ENCODE measurements at regions of chr21 and their contacts with region 1.

Region 1: GRCh38 chr21:34888569-34889319 is 160.4 kb downstream of the RUNX1 start:
- DNase-seq: peak; percentile 91
- H3K4me3 ChIP-seq: peak overlapping the region; percentile 59 to 89 (median 80)
- H3K27ac ChIP-seq: peak overlapping the region; percentile 88
- H3K4me1 ChIP-seq: peaks cover 36% of the 10 kb centered on the region
- H3K27me3 ChIP-seq: peaks cover 21 to 36% of the 10 kb centered on the region in 2 experiments
- CTCF ChIP-seq: no peak
- POLR2A ChIP-seq: peak; percentile 99

Region 2: GRCh38 chr21:34782506-34783365 is 106.0 kb before region 1 on chr21:
- CTCF ChIA-PET with region 1: no interaction called
- POLR2A ChIA-PET with region 1: no interaction called
- dilution Hi-C with region 1: no loop called
- intact Hi-C with region 1: no loop called
- DNase-seq: no peak
- H3K4me3 ChIP-seq: no peak overlapping the region
- H3K27ac ChIP-seq: no peak overlapping the region
- H3K4me1 ChIP-seq: no peaks in the 10 kb centered on the region
- H3K27me3 ChIP-seq: peaks cover 0 to 5% of the 10 kb centered on the region in 2 experiments
- CTCF ChIP-seq: no peak
- POLR2A ChIP-seq: no peak

Region 3: GRCh38 chr21:34836103-34836932 is 52.4 kb before region 1 on chr21:
- CTCF ChIA-PET with region 1: interaction called, 18 read pairs
- POLR2A ChIA-PET with region 1: interaction called, 13 read pairs
- dilution Hi-C with region 1: no loop called
- intact Hi-C with region 1: loop called (anchors 1 kb)
- DNase-seq: peak; percentile 98
- H3K4me3 ChIP-seq: peak overlapping the region in 1 of 3 experiments; percentile 3
- H3K27ac ChIP-seq: peak overlapping the region; percentile 78
- H3K4me1 ChIP-seq: peaks cover 30% of the 10 kb centered on the region
- H3K27me3 ChIP-seq: no peaks in the 10 kb centered on the region
- CTCF ChIP-seq: no peak
- POLR2A ChIP-seq: peak; percentile 26

Region 4: DNA sequence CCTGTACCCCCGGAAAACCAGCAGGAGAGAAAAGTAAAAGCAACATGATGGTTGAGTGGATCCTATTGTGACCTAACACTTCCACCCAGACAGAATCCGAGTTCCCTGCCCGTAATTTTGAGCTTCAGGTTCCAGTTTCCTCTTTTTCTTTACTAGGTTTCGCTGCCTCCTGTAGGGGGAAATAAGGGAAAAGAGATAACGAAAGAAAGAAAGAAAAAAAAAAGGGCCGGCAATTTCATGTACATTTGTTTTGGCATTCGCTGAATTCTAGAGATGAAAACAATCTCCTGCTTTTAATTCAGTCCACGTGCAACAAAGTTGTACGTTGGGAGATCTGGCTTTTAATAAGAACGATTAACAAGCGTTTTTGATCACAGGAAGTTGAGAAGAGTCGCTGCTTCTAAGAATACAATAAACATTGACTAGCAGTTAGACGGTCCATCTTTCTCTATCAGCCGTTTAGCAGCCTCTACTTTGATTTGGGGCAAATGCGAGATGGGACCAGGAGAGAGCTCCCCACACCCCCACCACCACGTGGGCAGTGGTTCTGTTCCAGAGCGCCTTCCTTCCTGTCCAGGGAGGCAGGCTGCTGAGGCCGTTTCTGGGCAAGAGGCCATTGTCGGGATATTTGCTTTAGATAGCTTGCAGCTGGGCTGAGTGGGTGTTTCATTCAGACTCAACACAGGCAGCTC is 316.3 kb after region 1 on chr21:
- CTCF ChIA-PET with region 1: interaction called, 7 read pairs
- POLR2A ChIA-PET with region 1: interaction called, 5 read pairs
- dilution Hi-C with region 1: no loop called
- intact Hi-C with region 1: loop called (anchors 2 kb)
- DNase-seq: peak; percentile 96
- H3K4me3 ChIP-seq: peak overlapping the region in 1 of 3 experiments; percentile 24
- H3K27ac ChIP-seq: peak overlapping the region; percentile 53
- H3K4me1 ChIP-seq: peaks cover 35% of the 10 kb centered on the region
- H3K27me3 ChIP-seq: no peaks in the 10 kb centered on the region
- CTCF ChIP-seq: no peak
- POLR2A ChIP-seq: peak; percentile 42

Region 5: GRCh38 chr21:35400233-35400957 is 511.7 kb after region 1 on chr21:
- CTCF ChIA-PET with region 1: interaction called, 81 read pairs
- POLR2A ChIA-PET with region 1: interaction called, 3 read pairs
- dilution Hi-C with region 1: no loop called
- intact Hi-C with region 1: loop called (anchors 1 kb)
- DNase-seq: peak; percentile 73
- H3K4me3 ChIP-seq: no peak overlapping the region
- H3K27ac ChIP-seq: no peak overlapping the region
- H3K4me1 ChIP-seq: peaks cover 7% of the 10 kb centered on the region
- H3K27me3 ChIP-seq: peaks cover 0 to 2% of the 10 kb centered on the region in 2 experiments
- CTCF ChIP-seq: peak; percentile 24 to 29
- POLR2A ChIP-seq: no peak

Region 6: DNA sequence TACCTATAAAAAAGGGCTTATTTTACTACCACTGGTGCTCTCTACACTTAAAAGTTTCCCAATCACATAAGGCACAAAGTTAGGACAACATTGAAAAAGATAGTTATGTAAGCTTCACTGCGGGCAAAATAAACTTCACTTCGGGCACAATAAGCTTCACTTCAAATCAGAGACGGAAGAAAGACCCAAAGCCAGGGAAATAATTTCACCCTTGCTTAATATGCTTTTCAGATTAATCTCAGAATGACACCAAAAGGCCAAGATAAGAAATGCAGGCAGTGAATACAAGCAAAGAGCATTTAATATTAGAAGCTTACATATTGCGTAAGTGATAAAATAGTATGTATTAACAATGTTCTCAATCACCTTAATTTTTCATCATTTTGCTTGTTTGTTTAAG is 727.3 kb after region 1 on chr21:
- CTCF ChIA-PET with region 1: interaction called, 25 read pairs
- POLR2A ChIA-PET with region 1: no interaction called
- dilution Hi-C with region 1: no loop called
- intact Hi-C with region 1: loop called (anchors 1 kb)
- DNase-seq: peak; percentile 58
- H3K4me3 ChIP-seq: no peak overlapping the region
- H3K27ac ChIP-seq: no peak overlapping the region
- H3K4me1 ChIP-seq: peaks cover 13% of the 10 kb centered on the region
- H3K27me3 ChIP-seq: no peaks in the 10 kb centered on the region
- CTCF ChIP-seq: peak; percentile 6 to 25
- POLR2A ChIP-seq: no peak

Region 7: GRCh38 chr21:35932232-35932911 is 1043.6 kb after region 1 on chr21:
- CTCF ChIA-PET with region 1: interaction called, 6 read pairs
- POLR2A ChIA-PET with region 1: interaction called, 12 read pairs
- dilution Hi-C with region 1: no loop called
- intact Hi-C with region 1: loop called (anchors 1 kb)
- DNase-seq: peak; percentile 95
- H3K4me3 ChIP-seq: peak overlapping the region in 1 of 3 experiments; percentile 21
- H3K27ac ChIP-seq: peak overlapping the region; percentile 87
- H3K4me1 ChIP-seq: peaks cover 26% of the 10 kb centered on the region
- H3K27me3 ChIP-seq: no peaks in the 10 kb centered on the region
- CTCF ChIP-seq: no peak
- POLR2A ChIP-seq: no peak